ENCODE measurements at regions of chr13 and their contacts with region 1.

Region 1: DNA sequence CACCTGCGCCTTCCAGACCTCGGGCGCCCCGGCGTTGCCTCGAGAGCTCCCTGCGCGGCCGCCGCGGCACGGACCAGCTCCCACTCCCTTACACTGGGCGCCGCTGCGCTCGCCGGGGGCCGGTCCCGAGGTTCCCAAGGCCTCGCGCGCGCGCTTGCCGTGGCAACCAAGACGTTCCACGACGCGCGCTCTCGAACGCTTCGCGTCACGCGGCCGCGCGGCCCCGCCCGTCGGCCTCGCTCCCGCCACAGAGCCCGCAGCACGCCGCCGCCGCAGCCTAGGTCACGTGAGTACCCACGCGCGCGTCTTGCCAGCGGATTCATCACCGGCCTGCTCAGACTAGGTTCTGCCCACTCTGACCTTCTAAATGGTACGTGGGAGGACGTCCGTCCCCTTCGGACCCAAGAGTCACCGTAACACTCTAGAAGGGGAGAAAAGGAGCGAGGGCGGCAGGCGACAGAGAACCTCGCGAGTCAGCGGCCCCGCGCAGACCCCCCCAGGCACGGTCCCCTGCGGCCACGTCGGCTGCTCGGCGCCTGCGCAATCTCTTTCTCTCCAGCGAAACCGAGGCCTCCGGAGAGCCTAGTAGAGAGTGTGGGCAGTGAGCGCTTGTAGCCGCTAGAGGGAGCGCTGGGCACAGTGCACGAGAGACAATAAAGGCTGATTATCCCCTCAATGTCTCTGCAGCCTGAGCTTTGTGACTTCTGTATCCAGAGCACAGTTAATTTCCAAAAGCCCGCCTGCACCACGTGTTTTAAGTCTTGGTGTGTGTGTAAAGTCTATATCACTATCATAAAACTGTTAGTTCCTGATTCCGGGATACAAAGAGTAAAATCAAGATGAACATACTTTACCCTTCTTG is at the start of gene SPART:
- DNase-seq: peak; percentile 56
- H3K4me3 ChIP-seq: no peak within 1 kb of the TSS
- H3K27ac ChIP-seq: no peak within 1 kb of the TSS
- H3K4me1 ChIP-seq: no peaks in the 10 kb centered on the region
- CTCF ChIP-seq: peak; percentile 92
- total RNA-seq, gene SPART: not detected in 2 replicates

Region 2: DNA sequence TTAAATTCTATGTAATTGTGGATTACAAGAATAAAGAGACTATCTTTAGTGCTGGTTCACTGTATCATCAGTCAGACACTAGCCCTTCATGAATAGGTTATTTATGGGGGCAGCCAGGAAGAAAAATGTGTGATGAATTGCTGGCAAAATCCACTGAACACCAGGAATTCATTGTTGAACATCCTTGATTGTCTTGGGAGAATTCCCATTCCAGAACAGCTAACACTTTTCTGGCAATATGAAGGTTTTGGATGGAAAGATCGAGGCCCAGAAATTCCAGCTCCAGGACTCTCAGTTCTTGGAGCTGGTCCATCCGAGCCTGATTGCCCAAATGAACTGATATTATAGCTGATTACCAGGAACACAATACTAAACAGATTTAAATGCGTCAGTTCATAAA is 11.2 kb after region 1 on chr13:
- CTCF ChIA-PET with region 1: no interaction called
- POLR2A ChIA-PET with region 1: no interaction called
- intact Hi-C with region 1: no loop called
- DNase-seq: no peak
- H3K4me3 ChIP-seq: no peak overlapping the region
- H3K27ac ChIP-seq: no peak overlapping the region
- H3K4me1 ChIP-seq: no peaks in the 10 kb centered on the region
- CTCF ChIP-seq: no peak

Region 3: GRCh38 chr13:36736119-36736726 is 389.8 kb after region 1 on chr13:
- CTCF ChIA-PET with region 1: no interaction called
- POLR2A ChIA-PET with region 1: no interaction called
- intact Hi-C with region 1: loop called (anchors 2 kb)
- DNase-seq: peak; percentile 54
- H3K4me3 ChIP-seq: no peak overlapping the region
- H3K27ac ChIP-seq: no peak overlapping the region
- H3K4me1 ChIP-seq: no peaks in the 10 kb centered on the region
- CTCF ChIP-seq: peak; percentile 91

Region 4: DNA sequence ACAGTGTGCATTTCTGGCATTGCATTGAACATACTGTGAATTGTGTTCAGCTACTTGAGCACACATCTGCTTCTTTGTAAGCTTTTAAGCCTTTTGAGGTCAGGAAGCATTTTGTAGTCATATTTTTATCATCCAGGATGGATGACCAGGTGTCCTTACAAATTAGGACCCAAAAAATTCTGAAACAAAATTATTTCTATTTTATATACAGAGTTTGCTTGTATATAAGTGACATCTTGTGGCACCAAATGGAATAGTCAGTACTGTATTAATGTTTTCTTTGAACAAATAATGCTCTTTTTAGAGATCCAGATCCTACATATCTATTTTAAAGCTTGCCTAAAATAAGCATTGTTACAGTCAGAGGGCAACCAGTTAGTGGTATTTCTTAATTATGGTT is 722.5 kb after region 1 on chr13:
- CTCF ChIA-PET with region 1: no interaction called
- POLR2A ChIA-PET with region 1: no interaction called
- intact Hi-C with region 1: loop called (anchors 5 kb)
- DNase-seq: peak; percentile 68
- H3K4me3 ChIP-seq: no peak overlapping the region
- H3K27ac ChIP-seq: peak overlapping the region; percentile 58
- H3K4me1 ChIP-seq: peaks cover 35% of the 10 kb centered on the region
- CTCF ChIP-seq: peak; percentile 90

Measured in OCI-LY7 (cell line).